Activated naive CD8-positive, alpha-beta T cell treated with anti-CD3 and anti-CD28 coated beads, Interleukin-2, amount 10 ng/mL, durations not matched to agents 7 days and 5 days (primary cell): ENCODE measurements at regions of chr12 and their contacts with region 1.

Region 1: GRCh38 chr12:120116792-120117651 is 469 bp upstream of the RAB35 start:
- DNase-seq: peak; percentile 100
- ATAC-seq: peak; percentile 86
- H3K4me3 Mint-ChIP-seq: peak overlapping the region; percentile 96
- H3K27ac Mint-ChIP-seq: peak overlapping the region; percentile 89
- H3K4me1 Mint-ChIP-seq: peaks cover 61% of the 10 kb centered on the region
- H3K27me3 Mint-ChIP-seq: no peaks in the 10 kb centered on the region

Region 2: GRCh38 chr12:120007272-120007671 is 109.8 kb before region 1 on chr12:
- POLR2A ChIA-PET with region 1: interaction called, 22 read pairs
- DNase-seq: no peak
- ATAC-seq: peak; percentile 85
- H3K4me3 Mint-ChIP-seq: peak overlapping the region; percentile 67
- H3K27ac Mint-ChIP-seq: peak overlapping the region; percentile 90
- H3K4me1 Mint-ChIP-seq: peaks cover 49% of the 10 kb centered on the region
- H3K27me3 Mint-ChIP-seq: no peaks in the 10 kb centered on the region

Region 3: GRCh38 chr12:120086801-120087621 is 30.0 kb before region 1 on chr12:
- POLR2A ChIA-PET with region 1: interaction called, 21 read pairs
- DNase-seq: peak; percentile 99
- ATAC-seq: peak; percentile 96
- H3K4me3 Mint-ChIP-seq: peak overlapping the region; percentile 68
- H3K27ac Mint-ChIP-seq: peak overlapping the region; percentile 70
- H3K4me1 Mint-ChIP-seq: peaks cover 20% of the 10 kb centered on the region
- H3K27me3 Mint-ChIP-seq: no peaks in the 10 kb centered on the region

Region 4: GRCh38 chr12:120102289-120103043 is 14.6 kb before region 1 on chr12:
- POLR2A ChIA-PET with region 1: interaction called, 13 read pairs
- DNase-seq: no peak
- ATAC-seq: no peak
- H3K4me3 Mint-ChIP-seq: no peak overlapping the region
- H3K27ac Mint-ChIP-seq: no peak overlapping the region
- H3K4me1 Mint-ChIP-seq: peaks cover 6% of the 10 kb centered on the region
- H3K27me3 Mint-ChIP-seq: no peaks in the 10 kb centered on the region

Region 5: DNA sequence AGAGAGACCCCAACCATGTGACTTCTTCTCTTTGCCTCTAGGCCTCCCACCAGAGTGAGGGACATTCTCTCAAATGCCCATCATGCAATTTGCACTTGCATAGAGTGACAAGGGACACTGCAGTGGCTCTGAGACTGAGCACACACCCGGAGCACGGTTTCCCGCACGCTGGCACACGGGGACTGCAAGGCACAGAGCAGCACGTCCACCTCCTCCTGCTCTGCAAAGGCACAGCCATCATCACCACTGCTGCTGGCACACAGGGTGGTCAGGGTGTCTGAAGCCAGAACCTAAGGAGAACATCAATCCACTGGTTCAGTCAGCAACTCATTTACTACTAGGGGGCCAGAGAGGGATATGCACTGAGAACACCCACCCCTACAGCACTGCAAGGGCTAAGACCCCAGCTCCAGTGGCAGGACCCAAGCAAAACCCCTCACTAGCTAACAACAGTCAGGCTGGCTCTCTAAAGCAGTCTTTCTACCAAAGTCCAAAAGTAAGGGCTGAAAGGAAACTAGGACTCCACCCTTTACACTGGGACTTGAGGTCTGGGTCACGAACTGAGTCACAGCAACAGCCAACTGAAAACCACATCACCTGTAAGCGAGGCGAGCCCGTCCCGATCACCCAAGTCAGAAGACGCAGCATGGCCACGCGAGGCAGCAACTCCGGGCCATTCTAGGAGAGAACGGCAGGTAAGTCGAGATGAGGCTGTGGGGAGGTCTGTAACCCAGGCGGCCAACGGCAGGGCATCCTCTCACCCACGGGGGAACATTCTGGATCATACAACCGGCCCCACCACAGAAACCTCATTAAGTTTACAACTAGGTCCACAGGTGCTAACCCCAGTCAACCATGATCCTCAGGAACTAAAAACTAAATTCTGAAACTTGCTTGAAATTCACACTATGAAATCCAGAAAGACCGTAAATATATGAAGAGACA is 39.6 kb after region 1 on chr12:
- POLR2A ChIA-PET with region 1: no interaction called
- DNase-seq: no peak
- ATAC-seq: no peak
- H3K4me3 Mint-ChIP-seq: no peak overlapping the region
- H3K27ac Mint-ChIP-seq: no peak overlapping the region
- H3K4me1 Mint-ChIP-seq: peaks cover 5% of the 10 kb centered on the region
- H3K27me3 Mint-ChIP-seq: no peaks in the 10 kb centered on the region